Activated CD4-positive, alpha-beta T cell treated with anti-CD3 and anti-CD28 coated beads, Interleukin-2, amount 10 ng/mL, durations not matched to agents 24 days and 14 days (primary cell): ENCODE measurements at regions of chr3 and their contacts with region 1.

Region 1: DNA sequence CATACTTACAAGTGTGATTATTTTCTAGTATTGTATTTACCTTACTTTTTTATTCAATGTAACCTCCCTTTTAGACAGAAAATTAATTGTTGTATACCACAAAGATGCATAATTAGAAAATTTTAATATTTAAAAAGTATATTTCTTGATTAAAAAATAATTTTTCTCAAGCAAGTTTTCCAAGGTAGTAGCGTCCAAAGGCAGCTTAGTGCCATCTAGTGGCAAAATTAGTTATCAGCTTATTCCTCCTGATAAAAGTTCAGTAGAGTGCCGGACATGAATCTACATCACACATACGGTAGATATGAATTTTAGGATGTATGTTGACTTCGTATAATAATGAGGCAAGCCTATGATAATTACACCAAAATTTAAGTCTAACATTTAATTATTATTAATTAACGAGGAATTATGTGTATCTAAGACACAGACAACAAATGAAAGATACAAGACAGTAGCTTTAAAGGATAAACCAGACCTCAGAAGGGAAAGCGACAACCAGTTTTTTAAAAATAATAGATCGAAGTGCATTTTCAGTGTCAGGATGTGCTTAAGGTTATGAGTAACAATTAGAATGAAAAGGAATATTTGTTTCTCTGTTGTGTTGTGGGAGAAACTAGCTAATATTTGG is 405.9 kb downstream of the ROBO1 start:
- DNase-seq: no peak
- H3K4me3 Mint-ChIP-seq: no peak overlapping the region
- H3K27ac Mint-ChIP-seq: no peak overlapping the region
- H3K4me1 Mint-ChIP-seq: no peaks in the 10 kb centered on the region
- H3K27me3 Mint-ChIP-seq: no peaks in the 10 kb centered on the region

Region 2: DNA sequence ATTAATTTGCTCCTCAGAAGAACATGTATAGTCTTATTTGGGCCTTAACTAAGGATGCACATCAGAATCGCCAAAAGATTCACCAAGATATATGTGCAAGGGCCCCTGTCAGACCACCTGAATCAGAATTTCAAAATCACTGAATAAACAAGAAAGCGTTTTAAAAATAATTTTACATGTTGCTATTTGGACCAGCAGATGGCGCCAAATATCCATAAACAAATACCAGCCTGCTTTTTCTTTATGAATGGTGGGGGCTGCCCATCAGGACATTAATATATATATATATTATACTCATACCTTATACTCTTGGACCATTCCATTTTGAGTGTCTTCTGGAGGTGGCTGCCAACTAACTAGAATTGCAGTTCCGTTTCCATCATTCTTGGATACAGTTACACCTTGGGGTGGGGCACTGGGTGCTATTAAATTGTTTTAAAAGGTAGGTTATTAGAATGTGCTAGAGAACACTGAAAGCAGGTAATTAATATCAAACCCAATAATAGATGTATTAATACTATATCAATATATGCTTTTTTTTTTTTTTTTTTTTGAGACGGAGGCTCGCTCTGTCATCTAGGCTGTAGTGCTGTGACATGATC is 702.4 kb before region 1 on chr3:
- intact Hi-C with region 1: loop called (anchors 2 kb)
- DNase-seq: peak; percentile 70
- H3K4me3 Mint-ChIP-seq: no peak overlapping the region
- H3K27ac Mint-ChIP-seq: no peak overlapping the region
- H3K4me1 Mint-ChIP-seq: no peaks in the 10 kb centered on the region
- H3K27me3 Mint-ChIP-seq: no peaks in the 10 kb centered on the region

Region 3: DNA sequence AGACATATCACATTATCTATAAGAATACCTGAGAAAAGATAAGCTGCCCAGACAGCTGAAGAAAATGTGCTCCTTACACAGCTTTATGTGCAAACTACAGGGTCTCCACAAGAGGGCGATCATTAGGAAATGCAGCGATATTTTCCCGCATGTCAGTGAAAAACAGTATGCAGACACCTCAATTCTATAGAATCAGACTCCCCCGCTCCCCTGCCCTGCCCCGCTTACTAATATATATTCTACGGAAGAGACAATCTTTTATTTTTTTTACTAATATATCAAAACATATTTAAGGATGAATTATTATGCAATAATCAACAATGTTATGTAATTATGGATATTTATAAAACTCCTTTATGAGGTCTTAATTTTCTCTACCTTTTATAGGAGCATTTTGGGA is 275.3 kb before region 1 on chr3:
- intact Hi-C with region 1: loop called (anchors 5 kb)
- DNase-seq: peak; percentile 70
- H3K4me3 Mint-ChIP-seq: no peak overlapping the region
- H3K27ac Mint-ChIP-seq: no peak overlapping the region
- H3K4me1 Mint-ChIP-seq: no peaks in the 10 kb centered on the region
- H3K27me3 Mint-ChIP-seq: no peaks in the 10 kb centered on the region

Region 4: GRCh38 chr3:79604681-79605080 is 242.8 kb after region 1 on chr3:
- intact Hi-C with region 1: no loop called
- DNase-seq: no peak
- H3K4me3 Mint-ChIP-seq: no peak overlapping the region
- H3K27ac Mint-ChIP-seq: no peak overlapping the region
- H3K4me1 Mint-ChIP-seq: no peaks in the 10 kb centered on the region
- H3K27me3 Mint-ChIP-seq: no peaks in the 10 kb centered on the region